PC-9 (cell line): ENCODE measurements at regions of chr3 and their contacts with region 1.

Region 1: GRCh38 chr3:32557643-32558352 is 12.9 kb downstream of the DYNC1LI1 start:
- DNase-seq: no peak
- H3K4me3 ChIP-seq: no peak overlapping the region
- H3K27ac ChIP-seq: no peak overlapping the region
- H3K4me1 ChIP-seq: no peaks in the 10 kb centered on the region
- H3K27me3 ChIP-seq: no peaks in the 10 kb centered on the region
- CTCF ChIP-seq: no peak

Region 2: GRCh38 chr3:32288819-32289218 is 269.0 kb before region 1 on chr3:
- CTCF ChIA-PET with region 1: interaction called, 12 read pairs
- POLR2A ChIA-PET with region 1: no interaction called
- intact Hi-C with region 1: no loop called
- DNase-seq: no peak
- H3K4me3 ChIP-seq: no peak overlapping the region
- H3K27ac ChIP-seq: no peak overlapping the region
- H3K4me1 ChIP-seq: peaks cover 26% of the 10 kb centered on the region
- H3K27me3 ChIP-seq: no peaks in the 10 kb centered on the region
- CTCF ChIP-seq: no peak

Region 3: GRCh38 chr3:33312361-33312760 is 754.6 kb after region 1 on chr3:
- CTCF ChIA-PET with region 1: no interaction called
- POLR2A ChIA-PET with region 1: interaction called, 11 read pairs
- intact Hi-C with region 1: no loop called
- DNase-seq: no peak
- H3K4me3 ChIP-seq: no peak overlapping the region
- H3K27ac ChIP-seq: no peak overlapping the region
- H3K4me1 ChIP-seq: peaks cover 17% of the 10 kb centered on the region
- H3K27me3 ChIP-seq: no peaks in the 10 kb centered on the region
- CTCF ChIP-seq: no peak